MCF 10A (cell line): ENCODE measurements at regions of chr1 and their contacts with region 1.

Region 1: DNA sequence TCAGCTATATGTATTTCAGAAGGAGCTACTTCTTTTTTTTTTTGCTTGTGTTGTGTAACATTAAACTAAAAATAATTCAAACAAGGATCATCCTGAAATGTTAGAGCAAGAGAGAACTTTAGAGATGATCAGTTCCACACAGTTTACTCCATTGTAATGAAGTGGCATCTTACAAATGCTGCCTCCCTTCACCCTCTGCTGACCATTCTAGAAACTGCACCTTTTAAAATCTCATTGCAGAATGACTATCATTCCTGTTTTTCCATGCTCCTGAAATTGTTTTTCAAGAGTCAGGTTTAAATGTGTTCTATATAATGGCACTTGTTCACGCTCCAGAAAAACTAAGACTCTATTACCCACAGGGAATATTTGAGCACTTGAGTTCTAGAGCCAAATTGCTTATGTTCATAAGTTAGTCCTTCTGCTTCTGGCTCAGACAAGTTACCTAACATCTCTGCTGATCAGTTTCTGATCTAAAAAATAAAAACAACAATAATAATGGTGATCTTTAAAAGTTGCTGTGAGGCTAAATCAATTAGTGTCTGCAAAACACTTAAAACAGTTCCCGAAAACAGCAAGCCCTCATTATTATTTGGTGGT is 21.5 kb upstream of the SLC44A5 start:
- DNase-seq: peak; percentile 58
- H3K4me3 Mint-ChIP-seq: no peak overlapping the region
- H3K27ac Mint-ChIP-seq: no peak overlapping the region
- H3K4me1 Mint-ChIP-seq: no peaks in the 10 kb centered on the region
- H3K27me3 Mint-ChIP-seq: peaks cover 20% of the 10 kb centered on the region
- CTCF ChIP-seq: peak; percentile 78

Region 2: DNA sequence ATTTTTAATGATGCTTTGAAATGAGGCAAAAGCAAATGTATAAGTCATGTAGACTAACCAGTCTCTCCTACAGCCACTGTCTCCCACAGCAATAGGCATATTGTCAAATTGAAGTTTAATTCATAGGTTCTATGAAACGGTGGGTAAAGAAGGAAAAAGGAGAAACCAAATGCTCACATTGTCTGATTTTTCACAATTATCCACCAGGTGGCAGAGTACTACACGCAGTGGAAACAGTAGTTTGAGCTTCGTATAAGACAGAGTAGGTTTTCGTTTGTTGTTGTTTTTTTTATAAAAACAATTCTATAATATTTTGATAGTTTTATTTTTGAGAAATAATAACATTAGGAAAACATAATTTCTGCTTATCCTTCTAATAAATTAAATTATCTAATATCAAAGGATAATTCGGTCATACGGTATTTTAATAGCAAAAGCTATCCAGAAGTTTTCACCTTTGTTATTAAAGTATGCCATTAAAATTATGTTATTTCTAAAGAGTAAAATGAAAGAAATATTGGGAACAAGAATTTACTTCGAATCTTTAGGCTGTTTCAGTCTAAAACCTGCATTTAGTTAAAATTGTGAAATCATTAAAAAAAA is 860.4 kb before region 1 on chr1:
- CTCF ChIA-PET with region 1: no interaction called
- POLR2A ChIA-PET with region 1: no interaction called
- intact Hi-C with region 1: loop called (anchors 10 kb)
- DNase-seq: peak; percentile 68
- H3K4me3 Mint-ChIP-seq: no peak overlapping the region
- H3K27ac Mint-ChIP-seq: no peak overlapping the region
- H3K4me1 Mint-ChIP-seq: peaks cover 4% of the 10 kb centered on the region
- H3K27me3 Mint-ChIP-seq: peaks cover 11% of the 10 kb centered on the region
- CTCF ChIP-seq: peak; percentile 51

Region 3: DNA sequence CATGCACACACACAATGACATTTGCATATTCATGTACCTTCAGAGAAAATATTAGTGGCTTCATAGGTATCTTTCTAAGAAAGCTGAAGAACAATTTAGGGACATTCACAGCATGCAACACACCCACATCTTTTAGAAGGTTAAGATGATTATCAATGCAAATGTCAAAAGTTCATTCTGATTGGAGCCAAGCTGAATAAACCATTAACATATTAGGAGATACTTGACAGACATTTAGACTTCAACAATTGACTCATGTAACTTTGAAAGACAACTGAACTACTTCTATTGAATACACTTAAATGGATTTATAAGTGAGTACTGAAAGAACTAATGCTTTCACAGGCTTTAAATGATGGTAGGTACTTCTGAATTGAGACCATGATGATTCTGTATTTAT is 387.2 kb before region 1 on chr1:
- CTCF ChIA-PET with region 1: interaction called, 10 read pairs
- POLR2A ChIA-PET with region 1: no interaction called
- intact Hi-C with region 1: no loop called
- DNase-seq: no peak
- H3K4me3 Mint-ChIP-seq: no peak overlapping the region
- H3K27ac Mint-ChIP-seq: no peak overlapping the region
- H3K4me1 Mint-ChIP-seq: no peaks in the 10 kb centered on the region
- H3K27me3 Mint-ChIP-seq: no peaks in the 10 kb centered on the region
- CTCF ChIP-seq: no peak

Region 4: GRCh38 chr1:75575837-75576236 is 56.6 kb before region 1 on chr1:
- CTCF ChIA-PET with region 1: no interaction called
- POLR2A ChIA-PET with region 1: no interaction called
- intact Hi-C with region 1: no loop called
- DNase-seq: no peak
- H3K4me3 Mint-ChIP-seq: no peak overlapping the region
- H3K27ac Mint-ChIP-seq: no peak overlapping the region
- H3K4me1 Mint-ChIP-seq: no peaks in the 10 kb centered on the region
- H3K27me3 Mint-ChIP-seq: peaks cover 19% of the 10 kb centered on the region
- CTCF ChIP-seq: no peak

Region 5: DNA sequence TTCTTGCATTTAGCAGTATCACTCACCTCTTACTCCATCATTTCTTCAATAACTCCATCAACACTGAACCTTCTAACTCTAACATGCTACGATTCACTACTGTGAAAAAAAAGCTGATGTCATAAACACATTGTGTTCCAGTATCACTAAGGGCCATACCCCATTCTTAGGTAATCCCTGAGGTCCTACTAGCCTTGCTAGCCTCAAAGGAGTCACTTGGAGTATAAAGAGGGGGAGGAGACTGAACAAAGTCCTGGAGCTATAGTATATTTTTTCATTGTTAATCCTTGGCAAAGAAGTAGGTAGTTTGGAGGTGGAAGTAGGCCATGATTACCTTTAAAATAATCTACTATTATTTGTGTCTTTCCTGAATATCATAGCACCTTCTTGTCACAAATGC is 21.4 kb before region 1 on chr1 and contains the start of gene SLC44A5:
- CTCF ChIA-PET with region 1: interaction called, 12 read pairs
- POLR2A ChIA-PET with region 1: no interaction called
- intact Hi-C with region 1: no loop called
- DNase-seq: no peak
- H3K4me3 Mint-ChIP-seq: no peak within 1 kb of the TSS
- H3K27ac Mint-ChIP-seq: no peak within 1 kb of the TSS
- H3K4me1 Mint-ChIP-seq: peaks cover 6% of the 10 kb centered on the region
- H3K27me3 Mint-ChIP-seq: peaks cover 29% of the 10 kb centered on the region
- CTCF ChIP-seq: no peak
- total RNA-seq, gene SLC44A5: 11.6 and 14.3 TPM in 2 replicates

Region 6: GRCh38 chr1:75785983-75786853 is 153.8 kb after region 1 on chr1 and contains the start of gene RABGGTB:
- CTCF ChIA-PET with region 1: interaction called, 3 read pairs
- POLR2A ChIA-PET with region 1: no interaction called
- intact Hi-C with region 1: loop called (anchors 5 kb)
- DNase-seq: peak; percentile 94
- H3K4me3 Mint-ChIP-seq: peak within 1 kb of the TSS; percentile 98
- H3K27ac Mint-ChIP-seq: peak within 1 kb of the TSS; percentile 98
- H3K4me1 Mint-ChIP-seq: peaks cover 27% of the 10 kb centered on the region
- H3K27me3 Mint-ChIP-seq: no peaks in the 10 kb centered on the region
- CTCF ChIP-seq: no peak
- total RNA-seq, gene RABGGTB: 116 and 127 TPM in 2 replicates

Region 7: GRCh38 chr1:75969550-75969949 is 337.1 kb after region 1 on chr1:
- CTCF ChIA-PET with region 1: no interaction called
- POLR2A ChIA-PET with region 1: no interaction called
- intact Hi-C with region 1: no loop called
- DNase-seq: peak; percentile 49
- H3K4me3 Mint-ChIP-seq: no peak overlapping the region
- H3K27ac Mint-ChIP-seq: peak overlapping the region; percentile 11
- H3K4me1 Mint-ChIP-seq: peaks cover 26% of the 10 kb centered on the region
- H3K27me3 Mint-ChIP-seq: no peaks in the 10 kb centered on the region
- CTCF ChIP-seq: no peak

Region 8: DNA sequence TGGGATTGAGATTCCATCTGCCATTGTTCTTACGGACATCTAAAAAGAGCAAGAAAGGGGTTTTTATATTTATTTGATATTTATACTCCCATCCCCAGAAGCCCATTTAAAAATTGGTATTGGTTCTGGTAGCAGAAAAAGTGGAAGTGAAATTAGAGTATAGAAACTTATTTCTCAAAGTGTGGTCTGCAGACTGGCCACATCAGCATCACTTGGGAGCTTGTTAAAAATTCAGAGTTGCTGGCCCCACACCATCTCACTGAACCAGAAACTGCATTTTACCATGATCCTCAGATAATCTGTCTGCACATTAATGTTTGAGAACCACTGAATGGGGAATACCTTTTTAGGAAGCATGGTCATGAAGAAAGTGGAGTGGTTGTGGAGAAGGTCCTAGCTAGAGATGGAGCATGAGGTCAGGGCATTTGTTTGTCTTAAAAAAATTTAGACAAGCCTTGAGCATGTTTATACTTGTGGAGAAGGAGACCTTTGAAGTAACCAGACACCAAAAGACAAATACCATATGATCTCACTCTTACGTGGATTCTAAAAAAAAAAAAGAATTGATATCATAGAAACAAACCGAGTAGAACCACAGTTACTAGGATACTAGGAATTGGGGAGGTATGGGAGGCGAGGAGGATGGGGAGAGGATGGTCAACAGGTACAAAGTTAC is 558.4 kb after region 1 on chr1:
- CTCF ChIA-PET with region 1: no interaction called
- POLR2A ChIA-PET with region 1: no interaction called
- intact Hi-C with region 1: no loop called
- DNase-seq: no peak
- H3K4me3 Mint-ChIP-seq: no peak overlapping the region
- H3K27ac Mint-ChIP-seq: no peak overlapping the region
- H3K4me1 Mint-ChIP-seq: no peaks in the 10 kb centered on the region
- H3K27me3 Mint-ChIP-seq: no peaks in the 10 kb centered on the region
- CTCF ChIP-seq: no peak